ENCODE measurements at regions of chrX and their contacts with region 1.

Region 1: GRCh38 chrX:36867143-36867542 is 141.0 kb upstream of the FAM47C start:
- DNase-seq: no peak
- H3K4me3 Mint-ChIP-seq: no peak overlapping the region
- H3K27ac Mint-ChIP-seq: no peak overlapping the region
- H3K4me1 Mint-ChIP-seq: no peaks in the 10 kb centered on the region
- H3K27me3 Mint-ChIP-seq: no peaks in the 10 kb centered on the region

Region 2: DNA sequence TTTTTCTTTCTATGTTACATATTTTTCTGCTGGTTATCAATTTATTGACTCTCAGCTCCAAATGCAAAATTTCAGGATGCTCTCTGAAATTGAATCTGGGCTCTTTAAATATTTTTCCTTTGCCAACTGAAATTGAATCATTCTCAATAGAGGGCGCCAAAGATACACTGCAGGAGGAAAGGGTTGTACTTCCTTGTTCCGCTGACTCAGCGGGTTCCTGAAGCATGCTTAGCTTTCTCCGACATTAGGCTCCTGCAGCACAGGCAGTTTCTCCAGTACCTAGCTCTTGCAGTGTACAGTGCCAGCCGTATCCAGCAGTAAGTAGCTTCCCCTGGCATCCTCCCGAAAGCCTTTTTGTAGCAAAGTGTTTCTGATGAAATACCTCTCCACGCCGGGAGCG is 976.4 kb before region 1 on chrX:
- intact Hi-C with region 1: loop called (anchors 10 kb)
- DNase-seq: peak; percentile 58
- H3K4me3 Mint-ChIP-seq: no peak overlapping the region
- H3K27ac Mint-ChIP-seq: no peak overlapping the region
- H3K4me1 Mint-ChIP-seq: no peaks in the 10 kb centered on the region
- H3K27me3 Mint-ChIP-seq: no peaks in the 10 kb centered on the region

Region 3: GRCh38 chrX:36753602-36754001 is 113.5 kb before region 1 on chrX:
- intact Hi-C with region 1: no loop called
- DNase-seq: no peak
- H3K4me3 Mint-ChIP-seq: no peak overlapping the region
- H3K27ac Mint-ChIP-seq: no peak overlapping the region
- H3K4me1 Mint-ChIP-seq: no peaks in the 10 kb centered on the region
- H3K27me3 Mint-ChIP-seq: no peaks in the 10 kb centered on the region

Region 4: DNA sequence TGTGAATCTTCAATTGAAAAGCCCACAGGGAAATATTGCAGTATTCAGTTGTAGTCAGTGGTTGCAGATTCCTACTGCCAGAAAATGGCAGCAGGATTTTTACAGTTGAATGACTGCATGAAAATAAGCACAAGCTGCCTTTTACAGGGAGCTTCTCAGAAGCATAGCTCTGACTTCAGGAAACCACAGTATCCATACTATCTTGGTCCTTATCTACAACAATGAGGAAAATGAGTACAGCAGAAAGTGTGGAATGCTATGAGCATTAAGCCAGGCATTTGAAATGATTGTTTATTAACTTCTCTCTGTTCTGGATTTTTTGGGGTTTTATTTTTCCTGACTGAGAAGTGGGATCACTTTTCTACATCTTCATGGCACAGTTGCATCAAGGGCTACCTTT is 447.4 kb after region 1 on chrX:
- intact Hi-C with region 1: no loop called
- DNase-seq: no peak
- H3K4me3 Mint-ChIP-seq: no peak overlapping the region
- H3K27ac Mint-ChIP-seq: no peak overlapping the region
- H3K4me1 Mint-ChIP-seq: no peaks in the 10 kb centered on the region
- H3K27me3 Mint-ChIP-seq: no peaks in the 10 kb centered on the region